B cell (primary cell): ENCODE measurements at regions of chr11 and their contacts with region 1.

Region 1: DNA sequence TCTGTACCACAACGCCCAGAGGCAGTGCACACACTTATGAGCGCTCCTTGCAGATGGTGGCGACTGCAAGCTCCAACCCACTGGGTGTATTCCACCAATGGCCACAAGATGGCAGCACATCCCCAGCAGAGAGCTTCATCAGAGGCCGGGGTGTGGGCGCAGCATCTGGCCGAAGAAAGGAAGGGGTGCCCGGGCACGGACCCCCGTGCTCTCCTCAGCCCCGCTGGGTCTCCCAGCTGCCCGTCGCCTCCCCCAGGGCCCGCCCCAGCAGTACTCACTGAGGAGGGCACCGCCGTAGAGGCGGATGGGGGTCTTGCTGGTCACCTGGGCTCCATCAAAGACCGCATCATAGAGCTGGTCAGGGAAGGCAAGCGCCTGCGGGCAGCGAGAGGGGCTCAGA is 14.2 kb downstream of the TP53I11 start:
- DNase-seq: peak; percentile 88
- ATAC-seq: peak; percentile 94
- H3K4me3 ChIP-seq: no peak overlapping the region
- H3K4me3 Mint-ChIP-seq: no peak overlapping the region
- H3K27ac ChIP-seq: no peak overlapping the region
- H3K27ac Mint-ChIP-seq: no peak overlapping the region
- H3K4me1 ChIP-seq: peaks cover 14 to 35% of the 10 kb centered on the region in 2 donors
- H3K4me1 Mint-ChIP-seq: peaks cover 29% of the 10 kb centered on the region
- H3K27me3 ChIP-seq: no peaks in the 10 kb centered on the region
- H3K27me3 Mint-ChIP-seq: no peaks in the 10 kb centered on the region
- CTCF ChIP-seq: peak; percentile 92

Region 2: DNA sequence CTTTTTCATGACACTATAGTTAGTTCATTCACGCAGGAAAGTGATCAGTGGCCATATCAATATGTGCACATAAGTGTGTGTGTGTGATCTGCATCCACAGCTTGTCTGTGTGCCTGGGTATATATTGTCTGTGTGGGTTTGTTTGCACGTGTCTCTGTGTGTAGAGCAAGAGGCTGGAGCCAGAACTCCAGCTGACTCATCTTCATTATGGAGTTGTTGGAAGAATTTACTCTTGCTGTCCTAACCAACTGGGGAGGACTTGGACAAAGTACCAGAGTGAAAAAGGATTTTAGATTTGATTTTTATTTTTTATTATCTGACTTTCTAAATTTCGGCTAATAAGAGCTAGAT is 49.8 kb before region 1 on chr11:
- CTCF ChIA-PET with region 1: no interaction called
- POLR2A ChIA-PET with region 1: no interaction called
- intact Hi-C with region 1: no loop called
- DNase-seq: no peak
- ATAC-seq: no peak
- H3K4me3 ChIP-seq: no peak overlapping the region
- H3K4me3 Mint-ChIP-seq: no peak overlapping the region
- H3K27ac ChIP-seq: no peak overlapping the region
- H3K27ac Mint-ChIP-seq: no peak overlapping the region
- H3K4me1 ChIP-seq: no peaks in the 10 kb centered on the region
- H3K4me1 Mint-ChIP-seq: no peaks in the 10 kb centered on the region
- H3K27me3 ChIP-seq: no peaks in the 10 kb centered on the region
- H3K27me3 Mint-ChIP-seq: no peaks in the 10 kb centered on the region
- CTCF ChIP-seq: no peak

Region 3: GRCh38 chr11:44911029-44911814 is 25.3 kb before region 1 on chr11:
- CTCF ChIA-PET with region 1: interaction called, 16 read pairs
- POLR2A ChIA-PET with region 1: no interaction called
- intact Hi-C with region 1: no loop called
- DNase-seq: peak; percentile 85
- ATAC-seq: peak; percentile 69
- H3K4me3 ChIP-seq: no peak overlapping the region
- H3K4me3 Mint-ChIP-seq: no peak overlapping the region
- H3K27ac ChIP-seq: no peak overlapping the region
- H3K27ac Mint-ChIP-seq: no peak overlapping the region
- H3K4me1 ChIP-seq: peaks cover 23 to 31% of the 10 kb centered on the region in 2 donors
- H3K4me1 Mint-ChIP-seq: peaks cover 24% of the 10 kb centered on the region
- H3K27me3 ChIP-seq: peaks cover 0 to 5% (median 0%) of the 10 kb centered on the region in 4 experiments
- H3K27me3 Mint-ChIP-seq: peaks cover 4% of the 10 kb centered on the region
- CTCF ChIP-seq: peak; percentile 82

Region 4: DNA sequence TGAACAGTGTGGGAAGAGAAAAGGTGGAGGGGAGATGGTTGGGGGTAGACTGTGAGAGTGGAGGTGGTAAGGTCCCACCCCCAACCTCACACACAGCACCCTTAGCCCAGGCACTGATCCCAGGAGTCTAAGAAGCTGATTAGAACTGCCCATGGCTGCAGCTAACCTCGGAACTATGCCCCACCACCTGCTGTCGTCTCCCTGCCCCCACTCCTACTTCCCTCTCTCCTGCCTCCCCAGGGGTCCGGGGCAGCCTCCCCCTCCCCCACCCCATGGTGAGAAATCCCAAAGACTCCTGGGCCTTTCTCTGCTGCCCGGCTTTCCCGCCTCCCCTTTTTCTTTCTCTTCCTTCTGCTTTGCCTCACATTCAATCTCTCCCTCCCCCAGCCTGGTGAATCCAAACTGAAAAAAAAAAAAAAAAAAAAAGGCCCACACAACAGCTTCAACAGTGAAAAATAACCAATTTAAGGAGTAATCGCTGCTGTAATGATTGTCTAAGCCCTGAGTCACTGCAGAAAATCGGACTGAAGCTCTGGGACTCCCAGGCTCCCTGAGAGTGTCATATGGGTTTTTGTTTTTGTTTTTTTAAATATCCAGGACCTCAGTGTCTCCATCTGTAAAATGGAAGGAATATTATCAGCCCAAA is 23.8 kb after region 1 on chr11:
- CTCF ChIA-PET with region 1: interaction called, 12 read pairs
- POLR2A ChIA-PET with region 1: no interaction called
- intact Hi-C with region 1: no loop called
- DNase-seq: no peak
- ATAC-seq: no peak
- H3K4me3 ChIP-seq: no peak overlapping the region
- H3K4me3 Mint-ChIP-seq: no peak overlapping the region
- H3K27ac ChIP-seq: no peak overlapping the region
- H3K27ac Mint-ChIP-seq: no peak overlapping the region
- H3K4me1 ChIP-seq: no peaks in the 10 kb centered on the region
- H3K4me1 Mint-ChIP-seq: peaks cover 3% of the 10 kb centered on the region
- H3K27me3 ChIP-seq: no peaks in the 10 kb centered on the region
- H3K27me3 Mint-ChIP-seq: peaks cover 3% of the 10 kb centered on the region
- CTCF ChIP-seq: no peak

Region 5: DNA sequence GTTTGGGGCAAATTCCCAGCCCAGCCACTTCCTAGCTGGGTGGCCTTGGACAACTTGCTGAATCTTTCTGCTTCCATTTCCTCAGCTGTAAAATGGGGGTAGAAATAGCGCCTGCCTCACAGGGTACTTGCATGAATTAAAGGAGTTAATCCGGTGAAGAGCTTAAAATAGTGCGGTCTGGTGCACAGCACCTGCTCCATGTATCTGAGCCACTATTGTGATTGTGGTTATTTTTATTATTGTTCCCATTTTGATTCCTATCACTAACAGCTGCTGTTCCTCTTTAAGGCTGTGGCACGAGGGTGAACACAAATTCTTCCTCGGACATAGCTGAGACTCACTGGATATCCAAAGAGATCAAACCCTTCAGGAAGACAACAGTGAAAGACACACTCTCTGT is 61.0 kb after region 1 on chr11:
- CTCF ChIA-PET with region 1: interaction called, 12 read pairs
- POLR2A ChIA-PET with region 1: no interaction called
- intact Hi-C with region 1: no loop called
- DNase-seq: no peak
- ATAC-seq: no peak
- H3K4me3 ChIP-seq: no peak overlapping the region
- H3K4me3 Mint-ChIP-seq: no peak overlapping the region
- H3K27ac ChIP-seq: no peak overlapping the region
- H3K27ac Mint-ChIP-seq: no peak overlapping the region
- H3K4me1 ChIP-seq: no peaks in the 10 kb centered on the region
- H3K4me1 Mint-ChIP-seq: peaks cover 5% of the 10 kb centered on the region
- H3K27me3 ChIP-seq: no peaks in the 10 kb centered on the region
- H3K27me3 Mint-ChIP-seq: peaks cover 3% of the 10 kb centered on the region
- CTCF ChIP-seq: no peak

Region 6: DNA sequence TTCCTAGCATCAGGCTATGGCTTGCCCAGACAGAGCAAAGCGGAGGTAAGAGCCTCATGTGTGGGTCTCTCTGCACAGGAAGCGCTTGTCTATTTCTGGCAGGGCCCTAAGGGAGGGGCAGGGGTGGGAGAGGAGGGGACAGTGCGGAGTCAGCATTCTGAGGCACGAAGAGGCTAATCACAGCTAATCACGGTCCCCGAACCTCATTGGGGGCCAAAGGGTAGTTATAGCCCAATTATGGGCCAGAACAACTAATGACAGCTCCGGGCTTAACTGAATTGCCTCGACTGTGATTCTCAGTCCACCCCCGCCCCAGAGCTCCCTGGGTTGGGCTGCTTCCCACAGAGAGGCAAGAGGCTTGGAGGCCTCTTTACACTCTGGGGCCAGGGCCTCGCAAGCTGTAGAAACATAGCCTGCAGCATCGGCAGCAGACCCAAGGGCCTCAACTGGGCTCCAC is 137.2 kb after region 1 on chr11:
- CTCF ChIA-PET with region 1: interaction called, 15 read pairs
- POLR2A ChIA-PET with region 1: no interaction called
- intact Hi-C with region 1: no loop called
- DNase-seq: peak; percentile 50
- ATAC-seq: peak; percentile 96
- H3K4me3 ChIP-seq: peak overlapping the region in 1 of 5 experiments; percentile 8
- H3K4me3 Mint-ChIP-seq: peak overlapping the region; percentile 51
- H3K27ac ChIP-seq: peak overlapping the region in 1 of 2 donors; percentile 13
- H3K27ac Mint-ChIP-seq: peak overlapping the region; percentile 63
- H3K4me1 ChIP-seq: peaks cover 24 to 38% of the 10 kb centered on the region in 2 donors
- H3K4me1 Mint-ChIP-seq: peaks cover 52% of the 10 kb centered on the region
- H3K27me3 ChIP-seq: no peaks in the 10 kb centered on the region
- H3K27me3 Mint-ChIP-seq: no peaks in the 10 kb centered on the region
- CTCF ChIP-seq: no peak

Region 7: GRCh38 chr11:45294499-45294898 is 358.0 kb after region 1 on chr11:
- CTCF ChIA-PET with region 1: interaction called, 5 read pairs
- POLR2A ChIA-PET with region 1: no interaction called
- intact Hi-C with region 1: loop called (anchors 5 kb)
- DNase-seq: no peak
- ATAC-seq: no peak
- H3K4me3 ChIP-seq: no peak overlapping the region
- H3K4me3 Mint-ChIP-seq: no peak overlapping the region
- H3K27ac ChIP-seq: no peak overlapping the region
- H3K27ac Mint-ChIP-seq: no peak overlapping the region
- H3K4me1 ChIP-seq: peaks cover 0 to 3% of the 10 kb centered on the region in 2 donors
- H3K4me1 Mint-ChIP-seq: no peaks in the 10 kb centered on the region
- H3K27me3 ChIP-seq: peaks cover 0 to 26% (median 6%) of the 10 kb centered on the region in 4 experiments
- H3K27me3 Mint-ChIP-seq: peaks cover 48% of the 10 kb centered on the region
- CTCF ChIP-seq: no peak